K562 (cell line): ENCODE measurements at regions of chr20 and their contacts with region 1.

Region 1: GRCh38 chr20:36573103-36573794 is at the start of gene TGIF2:
- DNase-seq: peak; percentile 91 to 97 (median 97)
- ATAC-seq: peak; percentile 76
- H3K4me3 ChIP-seq: peak within 1 kb of the TSS; percentile 80
- H3K27ac ChIP-seq: peak within 1 kb of the TSS; percentile 92
- H3K4me1 ChIP-seq: peaks cover 42 to 50% of the 10 kb centered on the region in 2 experiments
- H3K27me3 ChIP-seq: no peaks in the 10 kb centered on the region
- CTCF ChIP-seq: no peak
- EP300 ChIP-seq: no peak
- POLR2A ChIP-seq: peak; percentile 77
- RAD21 ChIP-seq: no peak
- polyA plus RNA-seq, gene TGIF2: 6.8 to 15.7 TPM

Region 2: GRCh38 chr20:36355469-36356171 is 217.6 kb before region 1 on chr20:
- CTCF ChIA-PET with region 1: no interaction called
- POLR2A ChIA-PET with region 1: no interaction called
- in situ Hi-C with region 1: no loop called
- intact Hi-C with region 1: no loop called
- DNase-seq: peak in 3 of 4 experiments; percentile 61 to 64 (median 62)
- ATAC-seq: peak; percentile 84
- H3K4me3 ChIP-seq: no peak overlapping the region
- H3K27ac ChIP-seq: no peak overlapping the region
- H3K4me1 ChIP-seq: peaks cover 0 to 3% of the 10 kb centered on the region in 2 experiments; a peak in 2 of 5 replicates
- H3K27me3 ChIP-seq: peaks cover 16 to 62% of the 10 kb centered on the region in 2 experiments; a peak in 4 of 5 replicates
- CTCF ChIP-seq: no peak
- EP300 ChIP-seq: no peak
- POLR2A ChIP-seq: no peak
- RAD21 ChIP-seq: no peak

Region 3: DNA sequence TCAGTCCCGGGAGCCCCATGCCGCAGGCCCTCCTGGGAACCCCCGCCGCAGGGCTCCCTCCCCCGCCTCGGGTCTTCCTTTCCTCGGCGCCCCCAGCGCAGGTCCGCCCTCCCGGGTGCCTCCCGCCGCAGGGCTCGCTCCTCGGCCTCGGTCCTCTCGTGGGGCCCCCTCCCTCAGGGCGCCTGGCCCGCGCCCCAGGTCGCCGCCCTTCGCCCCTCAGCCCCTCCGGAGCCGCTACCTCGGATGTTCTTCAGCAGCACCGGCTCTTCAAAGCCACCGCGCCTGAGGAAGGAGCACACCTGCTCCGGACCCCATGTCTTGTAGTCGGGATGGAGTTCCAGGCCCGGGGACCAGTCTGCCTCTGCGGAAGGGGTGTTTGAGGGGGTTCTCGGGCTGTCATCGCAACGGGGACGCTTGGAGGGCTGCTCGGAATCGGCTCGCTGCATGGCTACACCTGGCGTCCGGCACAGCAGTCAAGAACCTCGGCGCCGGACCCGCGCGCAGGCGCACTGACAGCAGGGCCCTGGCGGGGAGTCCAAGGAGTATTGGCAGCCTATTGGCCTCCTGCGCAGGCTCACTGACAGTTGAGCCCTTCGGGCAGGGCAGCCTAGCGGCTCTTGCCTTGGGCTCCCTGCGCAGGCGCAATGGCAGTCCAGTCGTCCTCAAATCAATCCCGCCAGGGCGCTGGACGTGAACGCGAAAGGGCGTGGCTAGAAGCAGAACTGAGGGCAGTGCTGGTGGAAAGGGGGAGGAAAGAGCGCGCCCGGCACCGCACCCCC is 378.1 kb after region 1 on chr20 and contains the start of gene SAMHD1:
- CTCF ChIA-PET with region 1: no interaction called
- POLR2A ChIA-PET with region 1: no interaction called
- in situ Hi-C with region 1: no loop called
- intact Hi-C with region 1: loop called (anchors 5 kb)
- DNase-seq: peak; percentile 99 to 100 (median 100)
- ATAC-seq: peak; percentile 98
- H3K4me3 ChIP-seq: peak within 1 kb of the TSS; percentile 83
- H3K27ac ChIP-seq: peak within 1 kb of the TSS; percentile 69
- H3K4me1 ChIP-seq: peaks cover 17 to 19% of the 10 kb centered on the region in 2 experiments; a peak in 4 of 5 replicates
- H3K27me3 ChIP-seq: no peaks in the 10 kb centered on the region
- CTCF ChIP-seq: 0 out of 6 replicates have a peak, but pooled peaks of 1 of the 3 experiments have one; percentile 10
- EP300 ChIP-seq: no peak
- POLR2A ChIP-seq: peak; percentile 84
- RAD21 ChIP-seq: no peak
- polyA plus RNA-seq, gene SAMHD1: 6.8 to 14.8 TPM